ENCODE measurements at regions of chr2 and their contacts with region 1.

Region 1: DNA sequence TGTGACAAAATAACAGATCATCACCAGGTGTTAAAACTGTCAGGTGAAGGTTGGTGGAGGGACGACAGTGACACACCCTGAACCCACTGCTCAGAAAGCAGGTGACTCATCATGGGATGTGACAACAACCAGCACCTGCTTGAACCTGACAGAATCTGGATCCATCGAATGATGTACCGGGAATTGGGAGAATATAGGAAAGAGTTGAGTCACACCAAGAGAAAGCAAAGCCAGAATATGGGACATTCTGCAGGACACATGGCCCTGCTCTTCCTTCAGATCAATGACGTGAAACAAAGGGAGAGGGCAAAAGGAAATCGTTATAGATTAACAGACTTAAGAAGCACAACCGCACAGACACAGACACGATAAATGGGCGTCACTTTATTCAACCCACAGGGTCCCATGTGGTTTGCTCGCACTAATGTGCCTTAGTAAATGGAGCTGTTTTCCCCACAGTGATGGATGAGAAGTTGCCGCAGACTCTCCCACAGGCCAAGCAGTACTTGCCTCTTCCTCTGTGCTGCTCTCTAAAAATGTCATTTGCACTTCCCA is 100.1 kb downstream of the CRACDL start:
- DNase-seq: no peak
- H3K4me3 ChIP-seq: no peak overlapping the region
- H3K27ac ChIP-seq: peak overlapping the region in 3 of 8 donors; percentile 14 to 53 (median 48)
- H3K4me1 ChIP-seq: peaks cover 0 to 40% (median 18%) of the 10 kb centered on the region in 6 donors
- H3K27me3 ChIP-seq: no peaks in the 10 kb centered on the region
- CTCF ChIP-seq: no peak
- POLR2A ChIP-seq: no peak

Region 2: DNA sequence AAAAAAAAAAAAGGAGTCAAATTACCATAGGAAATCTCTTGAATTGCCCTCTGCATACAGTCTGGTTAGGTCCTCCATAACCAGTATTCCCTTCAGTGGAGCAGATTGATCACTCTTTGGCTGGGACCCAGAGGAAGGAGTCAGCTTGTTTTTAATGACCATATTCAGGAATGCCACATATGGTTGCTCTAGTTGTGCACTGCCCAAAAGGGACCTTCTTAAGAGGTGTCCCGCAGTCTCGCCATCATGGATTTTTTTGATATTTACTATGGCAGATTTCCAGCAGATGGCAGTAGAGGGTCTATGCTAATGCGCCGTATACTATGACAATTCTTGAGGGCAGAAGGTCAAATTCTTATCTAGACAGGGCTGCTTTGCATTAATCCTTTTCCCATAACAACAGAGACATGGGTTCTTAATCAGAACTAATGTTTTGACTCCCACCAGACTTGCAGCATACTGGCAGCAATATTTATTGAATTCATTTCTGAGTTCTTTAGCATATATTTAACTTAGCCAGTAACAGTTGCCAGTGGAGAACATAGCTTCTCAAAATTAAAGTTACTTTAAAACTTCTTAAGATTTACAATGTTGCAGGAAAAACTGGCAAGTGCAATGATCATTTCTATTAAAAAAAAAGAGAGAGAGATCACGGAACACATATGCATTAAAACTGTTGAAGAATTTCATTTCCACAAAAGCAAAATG is 423.0 kb before region 1 on chr2:
- intact Hi-C with region 1: loop called (anchors 10 kb)
- DNase-seq: no peak
- H3K4me3 ChIP-seq: no peak overlapping the region
- H3K27ac ChIP-seq: no peak overlapping the region
- H3K4me1 ChIP-seq: peaks cover 0 to 10% (median 6%) of the 10 kb centered on the region in 6 donors
- H3K27me3 ChIP-seq: no peaks in the 10 kb centered on the region
- CTCF ChIP-seq: peak; percentile 46 to 79 (median 74)
- POLR2A ChIP-seq: no peak

Region 3: GRCh38 chr2:98654699-98655495 is 181.0 kb before region 1 on chr2:
- intact Hi-C with region 1: loop called (anchors 2 kb)
- DNase-seq: no peak
- H3K4me3 ChIP-seq: no peak overlapping the region
- H3K27ac ChIP-seq: peak overlapping the region in 6 of 8 donors; percentile 7 to 63 (median 25)
- H3K4me1 ChIP-seq: peaks cover 0 to 67% (median 15%) of the 10 kb centered on the region in 6 donors
- H3K27me3 ChIP-seq: no peaks in the 10 kb centered on the region
- CTCF ChIP-seq: no peak
- POLR2A ChIP-seq: no peak